ENCODE measurements at regions of chr15 and their contacts with region 1.

Region 1: DNA sequence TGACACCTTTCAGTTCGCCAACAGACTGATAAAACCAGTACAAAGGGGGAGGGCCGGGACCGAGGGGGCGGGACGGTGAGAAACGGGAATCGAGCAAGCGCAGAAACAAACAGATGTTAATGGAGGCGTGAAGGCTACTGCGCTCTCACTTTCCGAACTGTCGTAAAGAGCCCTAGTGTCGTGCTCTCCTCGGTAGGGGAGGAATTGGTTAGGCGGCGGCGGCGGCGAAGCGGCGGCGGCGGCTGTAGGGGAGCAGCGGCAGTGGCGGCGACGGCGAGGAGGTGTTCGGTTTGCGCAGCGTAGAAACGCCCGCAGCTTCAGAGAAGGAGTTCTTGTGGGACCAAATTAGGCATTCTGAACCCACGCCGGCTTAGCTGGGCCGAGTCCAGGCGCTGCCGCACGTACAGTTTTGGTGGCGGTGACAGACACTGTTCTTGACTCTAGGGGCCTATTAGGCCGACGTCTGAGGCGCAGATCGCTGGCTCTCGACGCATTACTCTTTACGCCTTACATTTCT is at the start of gene RNF111:
- DNase-seq: peak; percentile 87
- H3K4me3 Mint-ChIP-seq: peak within 1 kb of the TSS; percentile 93
- H3K27ac Mint-ChIP-seq: peak within 1 kb of the TSS; percentile 88
- H3K4me1 Mint-ChIP-seq: peaks cover 25% of the 10 kb centered on the region
- H3K27me3 Mint-ChIP-seq: peaks cover 10% of the 10 kb centered on the region
- total RNA-seq, gene RNF111: 36.4 and 36.9 TPM in 2 replicates

Region 2: DNA sequence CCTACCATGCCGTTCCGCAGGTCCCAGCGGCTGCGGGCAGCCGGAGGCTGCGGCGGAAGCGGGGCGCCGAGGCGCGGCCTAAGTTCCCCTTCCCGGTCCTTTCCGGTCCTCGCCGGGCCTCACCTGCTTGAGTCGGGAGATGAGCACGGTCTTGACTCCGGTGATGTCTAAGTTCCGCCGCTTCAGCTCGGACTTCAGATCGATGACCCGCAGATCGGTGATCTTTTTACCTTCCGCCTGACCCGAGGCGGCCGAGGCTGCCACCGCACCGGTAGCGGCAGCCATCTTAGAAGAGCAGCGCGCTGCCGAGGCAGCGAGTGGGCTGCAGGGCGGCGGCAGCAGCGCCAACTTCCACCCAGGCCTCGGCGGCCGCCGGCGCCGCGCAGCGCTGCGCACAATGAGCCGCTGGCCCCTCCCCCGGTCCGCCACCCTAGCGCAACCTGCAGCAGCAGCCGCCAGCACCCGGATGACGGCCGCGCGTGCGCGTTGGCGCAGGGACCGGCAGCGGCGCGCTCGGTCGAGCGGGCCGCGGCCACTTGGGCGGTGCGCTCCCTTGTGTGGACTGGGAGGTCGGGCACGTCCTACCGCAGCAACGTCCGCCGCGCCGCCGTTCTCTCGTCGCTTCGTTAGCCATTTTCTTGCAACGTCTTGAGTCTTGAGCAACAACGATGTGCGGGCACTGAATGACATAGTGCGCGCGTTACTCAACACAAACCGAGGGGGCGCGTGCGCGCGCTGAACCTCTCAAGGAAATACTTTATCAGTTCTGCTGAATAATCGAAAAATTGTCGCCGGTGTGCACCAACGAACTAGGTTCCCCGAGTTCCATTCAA is 54.0 kb before region 1 on chr15 and contains the start of gene SLTM:
- intact Hi-C with region 1: loop called (anchors 2 kb)
- DNase-seq: peak; percentile 89
- H3K4me3 Mint-ChIP-seq: peak within 1 kb of the TSS; percentile 97
- H3K27ac Mint-ChIP-seq: peak within 1 kb of the TSS; percentile 100
- H3K4me1 Mint-ChIP-seq: peaks cover 16% of the 10 kb centered on the region
- H3K27me3 Mint-ChIP-seq: no peaks in the 10 kb centered on the region
- total RNA-seq, gene SLTM: 108 and 120 TPM in 2 replicates

Region 3: DNA sequence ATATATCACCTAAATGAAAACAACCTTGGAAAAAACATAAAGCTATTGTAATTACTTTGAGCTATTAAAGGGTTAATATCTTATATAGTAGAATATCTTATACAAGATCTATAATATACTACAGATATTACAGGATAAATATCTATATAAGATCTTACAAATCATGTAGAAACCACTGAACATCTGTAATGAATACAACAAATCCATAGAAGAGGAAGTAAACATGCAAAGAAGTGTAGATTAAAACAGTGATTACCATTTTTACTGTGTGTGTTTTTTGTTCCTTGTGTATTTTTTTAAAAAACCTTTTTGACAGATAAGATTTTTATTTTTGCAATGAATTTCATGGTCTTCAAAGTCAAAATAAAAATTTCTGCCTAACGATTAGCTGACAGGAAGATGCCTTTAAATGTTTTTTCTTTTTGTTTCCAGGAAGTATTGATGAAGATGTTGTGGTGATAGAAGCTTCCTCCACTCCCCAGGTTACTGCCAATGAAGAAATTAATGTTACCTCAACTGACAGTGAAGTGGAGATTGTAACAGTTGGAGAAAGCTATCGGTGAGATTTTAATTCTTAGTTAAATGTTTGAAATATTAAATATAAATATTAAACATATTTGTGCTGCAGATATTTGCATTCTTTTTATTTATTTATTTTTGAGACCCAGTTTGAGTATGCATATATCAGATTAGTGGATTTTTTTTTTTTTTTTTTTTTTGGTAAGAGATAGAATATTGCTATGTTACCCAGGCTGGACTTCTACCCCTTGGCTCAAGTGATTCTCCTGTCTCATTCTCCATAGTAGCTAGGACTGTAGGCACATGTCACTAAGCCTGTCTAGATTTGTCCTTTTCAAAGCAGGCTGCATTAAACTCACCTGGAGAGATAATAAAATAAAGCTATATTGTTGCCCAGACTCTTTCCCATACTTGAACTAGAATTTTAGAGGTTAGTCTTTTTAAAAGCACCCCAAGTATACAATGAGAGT is 64.6 kb after region 1 on chr15:
- intact Hi-C with region 1: loop called (anchors 5 kb)
- DNase-seq: no peak
- H3K4me3 Mint-ChIP-seq: peak overlapping the region; percentile 51
- H3K27ac Mint-ChIP-seq: peak overlapping the region; percentile 78
- H3K4me1 Mint-ChIP-seq: peaks cover 34% of the 10 kb centered on the region
- H3K27me3 Mint-ChIP-seq: no peaks in the 10 kb centered on the region

Region 4: DNA sequence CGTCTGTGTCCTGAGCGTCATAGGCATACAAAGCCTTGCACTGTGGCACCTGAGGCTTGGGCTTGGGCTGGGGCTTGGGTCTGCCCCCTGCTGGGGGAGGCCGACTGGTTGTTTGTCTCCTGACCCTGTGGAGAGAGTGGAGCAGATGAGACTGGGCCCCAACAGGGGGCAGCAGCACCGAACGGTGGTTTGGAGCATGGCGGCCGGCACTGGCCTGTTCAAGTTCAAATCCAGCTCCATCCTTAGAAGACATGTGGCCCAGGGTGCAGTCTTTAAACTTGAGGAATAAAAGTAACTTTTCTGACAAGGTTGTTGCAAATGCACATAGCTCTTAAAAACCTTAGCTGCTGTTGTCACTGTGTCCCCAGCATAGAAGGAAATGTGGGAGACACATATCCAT is 150.7 kb after region 1 on chr15:
- intact Hi-C with region 1: loop called (anchors 10 kb)
- DNase-seq: peak; percentile 48
- H3K4me3 Mint-ChIP-seq: no peak overlapping the region
- H3K27ac Mint-ChIP-seq: peak overlapping the region; percentile 75
- H3K4me1 Mint-ChIP-seq: peaks cover 26% of the 10 kb centered on the region
- H3K27me3 Mint-ChIP-seq: no peaks in the 10 kb centered on the region

Region 5: GRCh38 chr15:59247364-59247763 is 259.8 kb after region 1 on chr15:
- intact Hi-C with region 1: loop called (anchors 10 kb)
- DNase-seq: peak; percentile 45
- H3K4me3 Mint-ChIP-seq: no peak overlapping the region
- H3K27ac Mint-ChIP-seq: no peak overlapping the region
- H3K4me1 Mint-ChIP-seq: peaks cover 39% of the 10 kb centered on the region
- H3K27me3 Mint-ChIP-seq: peaks cover 2% of the 10 kb centered on the region

Region 6: GRCh38 chr15:59662260-59662659 is 674.7 kb after region 1 on chr15:
- intact Hi-C with region 1: loop called (anchors 10 kb)
- DNase-seq: no peak
- H3K4me3 Mint-ChIP-seq: no peak overlapping the region
- H3K27ac Mint-ChIP-seq: no peak overlapping the region
- H3K4me1 Mint-ChIP-seq: peaks cover 6% of the 10 kb centered on the region
- H3K27me3 Mint-ChIP-seq: no peaks in the 10 kb centered on the region